Activated CD4-positive, alpha-beta memory T cell treated with anti-CD3 and anti-CD28 coated beads for 36 hours (primary cell): ENCODE measurements at regions of chr14 and their contacts with region 1.

Region 1: DNA sequence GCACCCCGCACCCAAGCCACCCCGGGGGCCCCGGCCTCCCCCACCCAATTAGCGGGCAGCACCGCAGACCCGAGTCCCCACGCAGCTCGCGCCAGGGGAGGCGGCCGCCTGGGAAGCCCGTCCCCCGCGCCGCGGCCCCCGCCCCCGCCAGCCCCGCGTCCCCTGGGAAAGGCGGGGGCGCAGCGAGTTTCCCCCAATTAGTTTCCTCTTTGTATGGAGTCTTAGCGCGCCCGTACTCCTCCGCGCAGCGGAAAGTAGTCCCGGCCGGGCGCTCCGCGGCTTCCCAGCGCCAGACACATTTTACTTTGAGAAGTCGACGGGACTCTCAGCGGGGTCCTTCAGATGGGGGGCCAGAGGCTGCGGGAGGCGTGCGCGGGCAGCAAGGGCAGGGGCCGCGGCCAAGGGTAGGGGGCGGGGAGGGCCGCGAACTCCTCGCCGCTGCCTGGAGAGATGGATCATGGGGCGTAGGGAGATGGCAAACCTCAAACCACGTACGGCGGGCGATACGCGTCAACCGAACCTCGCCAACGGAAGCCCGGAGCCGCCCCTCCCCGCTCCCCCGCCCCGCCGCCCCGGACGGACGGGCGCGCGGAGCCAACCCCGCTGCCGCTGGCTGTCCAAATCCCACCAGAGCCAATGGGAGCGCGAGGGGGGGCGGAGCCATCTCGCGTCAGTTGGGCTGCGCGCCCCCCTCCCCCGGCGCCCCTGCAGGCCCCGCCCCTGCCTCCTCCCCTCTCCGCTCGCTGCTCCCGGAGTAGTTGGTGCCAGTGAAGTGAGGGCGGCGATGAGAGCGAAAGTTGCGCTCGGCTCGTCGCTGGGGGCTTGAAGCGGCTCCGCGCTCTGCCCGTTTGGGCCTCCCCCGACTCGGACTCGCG is at the start of gene RCOR1:
- DNase-seq: peak; percentile 99
- H3K4me3 Mint-ChIP-seq: peak within 1 kb of the TSS; percentile 84
- H3K27ac Mint-ChIP-seq: peak within 1 kb of the TSS; percentile 93
- H3K4me1 Mint-ChIP-seq: peaks cover 32% of the 10 kb centered on the region
- H3K27me3 Mint-ChIP-seq: no peaks in the 10 kb centered on the region
- total RNA-seq, gene RCOR1: 14.1 to 14.3 TPM

Region 2: DNA sequence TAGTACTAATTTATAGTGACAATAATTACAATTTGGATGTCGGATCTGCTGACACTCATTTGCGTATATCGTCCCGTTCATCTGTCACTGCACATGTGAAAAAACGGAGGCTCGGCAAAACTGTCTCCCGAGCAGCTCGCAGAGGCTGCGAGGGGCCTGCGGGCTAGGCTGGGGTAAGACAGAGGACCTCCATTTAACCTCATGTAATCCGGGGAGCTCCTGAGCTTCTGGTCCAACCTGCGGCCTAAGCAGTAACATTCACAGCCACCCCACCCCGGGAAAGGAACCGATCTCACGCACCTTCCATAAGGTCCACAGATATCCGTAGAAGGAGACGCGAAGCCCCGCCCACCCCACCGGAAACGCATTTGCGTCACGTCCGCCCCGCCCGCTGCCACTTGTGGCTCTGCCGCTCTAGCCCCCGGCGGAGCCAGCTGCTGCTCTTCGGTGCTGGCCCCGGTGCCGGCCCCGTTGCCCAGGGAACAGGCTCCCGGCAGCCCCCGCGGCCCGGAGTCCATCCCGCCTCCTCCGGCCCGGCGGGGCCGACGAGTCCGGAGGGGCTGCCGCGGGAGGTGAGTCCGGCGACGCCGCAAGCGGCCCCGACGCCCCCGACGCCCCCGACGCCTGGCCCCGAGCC is 229.5 kb before region 1 on chr14 and contains the starts of genes CINP and TECPR2:
- CTCF ChIA-PET with region 1: interaction called, 4 read pairs
- POLR2A ChIA-PET with region 1: no interaction called
- intact Hi-C with region 1: loop called (anchors 10 kb)
- DNase-seq: peak; percentile 99
- H3K4me3 Mint-ChIP-seq: no peak within 1 kb of the TSS
- H3K27ac Mint-ChIP-seq: peak within 1 kb of the TSS; percentile 96
- H3K4me1 Mint-ChIP-seq: peaks cover 31% of the 10 kb centered on the region
- H3K27me3 Mint-ChIP-seq: no peaks in the 10 kb centered on the region
- total RNA-seq, gene CINP: 50.5 to 51.2 TPM
- total RNA-seq, gene TECPR2: 6.2 to 7.0 TPM

Region 3: GRCh38 chr14:102544759-102545460 is 47.2 kb before region 1 on chr14:
- CTCF ChIA-PET with region 1: interaction called, 3 read pairs
- POLR2A ChIA-PET with region 1: no interaction called
- intact Hi-C with region 1: loop called (anchors 1 kb)
- DNase-seq: peak; percentile 31
- H3K4me3 Mint-ChIP-seq: no peak overlapping the region
- H3K27ac Mint-ChIP-seq: no peak overlapping the region
- H3K4me1 Mint-ChIP-seq: peaks cover 2% of the 10 kb centered on the region
- H3K27me3 Mint-ChIP-seq: peaks cover 23% of the 10 kb centered on the region

Region 4: DNA sequence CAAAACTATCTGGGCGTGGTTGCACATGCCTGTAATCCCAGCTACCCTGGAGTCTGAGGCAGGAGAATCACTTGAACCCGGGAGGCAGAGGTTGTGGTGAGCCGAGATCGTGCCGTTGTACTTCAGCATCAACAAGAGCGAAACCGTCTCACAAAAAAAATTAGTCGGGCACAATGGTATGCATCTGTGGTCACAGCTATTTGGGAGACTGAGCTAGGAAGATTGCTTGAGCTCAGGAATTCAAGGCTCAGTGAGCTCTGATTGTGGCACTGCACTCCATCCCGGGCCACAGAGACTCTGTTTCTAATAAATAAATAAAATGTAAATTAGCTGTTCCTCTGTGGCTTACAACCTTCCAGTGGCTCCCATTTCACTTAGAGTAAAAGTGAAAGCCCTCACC is 28.3 kb after region 1 on chr14:
- CTCF ChIA-PET with region 1: interaction called, 11 read pairs
- POLR2A ChIA-PET with region 1: interaction called, 3 read pairs
- intact Hi-C with region 1: no loop called
- DNase-seq: no peak
- H3K4me3 Mint-ChIP-seq: no peak overlapping the region
- H3K27ac Mint-ChIP-seq: no peak overlapping the region
- H3K4me1 Mint-ChIP-seq: peaks cover 46% of the 10 kb centered on the region
- H3K27me3 Mint-ChIP-seq: no peaks in the 10 kb centered on the region

Region 5: GRCh38 chr14:102694530-102695166 is 102.5 kb after region 1 on chr14:
- CTCF ChIA-PET with region 1: interaction called, 29 read pairs
- POLR2A ChIA-PET with region 1: no interaction called
- intact Hi-C with region 1: no loop called
- DNase-seq: peak; percentile 49
- H3K4me3 Mint-ChIP-seq: no peak overlapping the region
- H3K27ac Mint-ChIP-seq: no peak overlapping the region
- H3K4me1 Mint-ChIP-seq: peaks cover 18% of the 10 kb centered on the region
- H3K27me3 Mint-ChIP-seq: no peaks in the 10 kb centered on the region

Region 6: GRCh38 chr14:102805371-102806246 is 213.5 kb after region 1 on chr14:
- CTCF ChIA-PET with region 1: no interaction called
- POLR2A ChIA-PET with region 1: no interaction called
- intact Hi-C with region 1: loop called (anchors 5 kb)
- DNase-seq: peak; percentile 79
- H3K4me3 Mint-ChIP-seq: peak overlapping the region; percentile 72
- H3K27ac Mint-ChIP-seq: peak overlapping the region; percentile 99
- H3K4me1 Mint-ChIP-seq: peaks cover 68% of the 10 kb centered on the region
- H3K27me3 Mint-ChIP-seq: no peaks in the 10 kb centered on the region